Sigmoid colon (tissue), 7 donors: ENCODE measurements at regions of chr10 and their contacts with region 1.

Region 1: GRCh38 chr10:122503012-122503411 is 41.7 kb downstream of the HTRA1 start:
- DNase-seq: no peak
- H3K4me3 ChIP-seq: no peak overlapping the region
- H3K27ac ChIP-seq: peak overlapping the region in 2 of 4 donors; percentile 81 to 85
- H3K4me1 ChIP-seq: peaks cover 0 to 51% (median 47%) of the 10 kb centered on the region in 4 donors
- H3K27me3 ChIP-seq: no peaks in the 10 kb centered on the region
- CTCF ChIP-seq: no peak
- EP300 ChIP-seq: no peak
- POLR2A ChIP-seq: no peak

Region 2: DNA sequence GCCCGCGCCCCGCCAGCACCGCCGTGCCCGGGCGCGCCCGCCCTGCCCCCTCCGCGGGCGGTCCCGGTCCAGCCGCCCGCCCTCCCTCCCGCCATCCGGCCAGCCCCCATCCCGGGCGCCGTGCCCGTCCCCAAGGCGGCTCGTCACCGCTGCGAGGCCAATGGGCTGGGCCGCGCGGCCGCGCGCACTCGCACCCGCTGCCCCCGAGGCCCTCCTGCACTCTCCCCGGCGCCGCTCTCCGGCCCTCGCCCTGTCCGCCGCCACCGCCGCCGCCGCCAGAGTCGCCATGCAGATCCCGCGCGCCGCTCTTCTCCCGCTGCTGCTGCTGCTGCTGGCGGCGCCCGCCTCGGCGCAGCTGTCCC is 41.7 kb before region 1 on chr10 and contains the start of gene HTRA1:
- intact Hi-C with region 1: loop called (anchors 2 kb)
- DNase-seq: peak; percentile 92
- H3K4me3 ChIP-seq: peak within 1 kb of the TSS; percentile 65 to 83 (median 71)
- H3K27ac ChIP-seq: peak within 1 kb of the TSS; percentile 84 to 93 (median 88)
- H3K4me1 ChIP-seq: peaks cover 3 to 33% (median 24%) of the 10 kb centered on the region in 4 donors
- H3K27me3 ChIP-seq: no peaks in the 10 kb centered on the region
- CTCF ChIP-seq: no peak
- EP300 ChIP-seq: no peak
- POLR2A ChIP-seq: no peak
- total RNA-seq, gene HTRA1: 119 to 162 (median 127) TPM